B cell (primary cell): ENCODE measurements at regions of chr6 and their contacts with region 1.

Region 1: DNA sequence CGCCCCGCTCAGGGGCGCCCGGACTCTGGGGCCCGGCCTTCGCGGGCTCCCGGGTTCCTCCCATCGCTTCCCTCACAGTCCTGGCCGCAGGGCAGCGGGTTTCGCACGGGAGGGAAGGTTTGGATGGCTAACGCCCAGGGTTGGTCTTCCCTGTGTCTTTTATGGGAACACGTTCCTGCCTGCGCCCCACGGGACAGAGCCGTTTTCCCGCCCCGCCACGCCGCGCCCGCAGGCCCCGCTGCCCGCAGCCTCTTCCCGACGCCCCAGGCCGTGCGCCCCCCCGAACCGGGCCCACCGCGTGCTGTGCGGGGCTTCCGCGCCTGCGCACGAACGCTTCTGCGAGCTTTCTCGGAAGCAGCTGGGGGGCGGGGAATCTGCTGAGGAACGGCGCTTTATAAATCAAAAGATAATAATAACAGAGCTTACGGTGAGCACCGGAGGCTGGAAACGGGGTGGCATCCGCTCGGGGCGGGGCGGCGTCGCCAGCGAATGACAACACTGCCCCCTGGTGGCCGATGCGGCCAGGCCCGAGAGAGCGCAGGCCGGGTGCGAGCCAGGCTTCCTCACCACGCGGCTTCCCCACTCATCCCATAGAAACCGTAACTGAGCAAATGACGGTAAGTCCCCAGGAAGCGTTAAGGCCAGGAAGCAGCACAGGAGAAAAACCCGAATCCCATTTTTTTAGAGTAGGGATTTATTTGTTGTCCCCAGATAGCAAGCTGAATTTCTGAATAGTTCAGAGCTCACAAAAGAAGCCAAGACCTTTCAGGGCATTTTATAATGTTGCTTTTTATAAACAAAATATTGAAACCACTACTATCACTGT is 116.4 kb downstream of the MYLK4 start:
- DNase-seq: peak; percentile 83
- ATAC-seq: peak; percentile 96
- H3K4me3 ChIP-seq: peak overlapping the region in 4 of 5 experiments; percentile 34 to 63 (median 48)
- H3K4me3 Mint-ChIP-seq: peak overlapping the region; percentile 80
- H3K27ac ChIP-seq: no peak overlapping the region
- H3K27ac Mint-ChIP-seq: peak overlapping the region; percentile 26
- H3K4me1 ChIP-seq: peaks cover 5 to 10% of the 10 kb centered on the region in 2 donors
- H3K4me1 Mint-ChIP-seq: peaks cover 6% of the 10 kb centered on the region
- H3K27me3 ChIP-seq: peaks cover 0 to 5% (median under 1%) of the 10 kb centered on the region in 4 experiments
- H3K27me3 Mint-ChIP-seq: peaks cover 18% of the 10 kb centered on the region
- CTCF ChIP-seq: peak; percentile 97

Region 2: GRCh38 chr6:1609648-1610496 is 1024.5 kb before region 1 on chr6 and contains the start of gene FOXC1:
- CTCF ChIA-PET with region 1: interaction called, 11 read pairs
- POLR2A ChIA-PET with region 1: no interaction called
- intact Hi-C with region 1: loop called (anchors 2 kb)
- DNase-seq: peak; percentile 64
- ATAC-seq: peak; percentile 56
- H3K4me3 ChIP-seq: peak within 1 kb of the TSS in 3 of 5 experiments; percentile 44 to 60 (median 54)
- H3K4me3 Mint-ChIP-seq: peak within 1 kb of the TSS; percentile 88
- H3K27ac ChIP-seq: no peak within 1 kb of the TSS
- H3K27ac Mint-ChIP-seq: peak within 1 kb of the TSS; percentile 81
- H3K4me1 ChIP-seq: peaks cover 65 to 79% of the 10 kb centered on the region in 2 donors
- H3K4me1 Mint-ChIP-seq: peaks cover 50% of the 10 kb centered on the region
- H3K27me3 ChIP-seq: peaks cover 0 to 75% (median 59%) of the 10 kb centered on the region in 4 experiments
- H3K27me3 Mint-ChIP-seq: peaks cover 58% of the 10 kb centered on the region
- CTCF ChIP-seq: no peak
- total RNA-seq, gene FOXC1: 0.39 and 0.52 TPM in 2 replicates

Region 3: DNA sequence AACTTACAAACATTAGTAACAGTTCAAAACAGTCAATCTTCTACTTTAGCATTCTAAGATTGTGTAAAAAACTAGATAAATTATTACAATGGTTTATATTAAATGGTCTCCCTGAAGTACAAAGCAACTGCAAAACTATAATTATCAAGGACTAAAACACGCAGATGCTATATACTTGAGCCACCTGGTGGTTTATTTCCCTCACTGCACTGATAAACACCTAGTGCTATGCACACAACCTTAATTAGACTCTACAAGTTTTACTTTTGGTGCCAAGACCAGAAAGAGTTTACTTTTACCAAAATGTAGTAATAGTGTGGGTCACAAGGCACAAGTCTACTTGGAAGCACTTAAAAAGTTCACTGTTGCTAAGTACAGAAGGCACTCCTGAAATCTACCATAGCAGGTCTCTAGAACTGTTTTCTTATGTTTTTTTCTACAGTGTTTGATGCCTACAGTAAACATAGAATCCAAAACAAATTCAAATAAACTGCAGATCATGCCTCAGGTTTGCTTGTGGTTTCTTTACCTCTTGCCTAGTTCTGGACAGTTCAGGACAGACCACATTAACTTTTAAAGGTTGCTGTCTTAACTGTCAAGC is 438.2 kb before region 1 on chr6:
- CTCF ChIA-PET with region 1: interaction called, 3 read pairs
- POLR2A ChIA-PET with region 1: no interaction called
- intact Hi-C with region 1: loop called (anchors 5 kb)
- DNase-seq: peak; percentile 67
- ATAC-seq: peak; percentile 73
- H3K4me3 ChIP-seq: no peak overlapping the region
- H3K4me3 Mint-ChIP-seq: no peak overlapping the region
- H3K27ac ChIP-seq: no peak overlapping the region
- H3K27ac Mint-ChIP-seq: no peak overlapping the region
- H3K4me1 ChIP-seq: peaks cover 10 to 11% of the 10 kb centered on the region in 2 donors
- H3K4me1 Mint-ChIP-seq: peaks cover 2% of the 10 kb centered on the region
- H3K27me3 ChIP-seq: no peaks in the 10 kb centered on the region
- H3K27me3 Mint-ChIP-seq: no peaks in the 10 kb centered on the region
- CTCF ChIP-seq: peak; percentile 97

Region 4: DNA sequence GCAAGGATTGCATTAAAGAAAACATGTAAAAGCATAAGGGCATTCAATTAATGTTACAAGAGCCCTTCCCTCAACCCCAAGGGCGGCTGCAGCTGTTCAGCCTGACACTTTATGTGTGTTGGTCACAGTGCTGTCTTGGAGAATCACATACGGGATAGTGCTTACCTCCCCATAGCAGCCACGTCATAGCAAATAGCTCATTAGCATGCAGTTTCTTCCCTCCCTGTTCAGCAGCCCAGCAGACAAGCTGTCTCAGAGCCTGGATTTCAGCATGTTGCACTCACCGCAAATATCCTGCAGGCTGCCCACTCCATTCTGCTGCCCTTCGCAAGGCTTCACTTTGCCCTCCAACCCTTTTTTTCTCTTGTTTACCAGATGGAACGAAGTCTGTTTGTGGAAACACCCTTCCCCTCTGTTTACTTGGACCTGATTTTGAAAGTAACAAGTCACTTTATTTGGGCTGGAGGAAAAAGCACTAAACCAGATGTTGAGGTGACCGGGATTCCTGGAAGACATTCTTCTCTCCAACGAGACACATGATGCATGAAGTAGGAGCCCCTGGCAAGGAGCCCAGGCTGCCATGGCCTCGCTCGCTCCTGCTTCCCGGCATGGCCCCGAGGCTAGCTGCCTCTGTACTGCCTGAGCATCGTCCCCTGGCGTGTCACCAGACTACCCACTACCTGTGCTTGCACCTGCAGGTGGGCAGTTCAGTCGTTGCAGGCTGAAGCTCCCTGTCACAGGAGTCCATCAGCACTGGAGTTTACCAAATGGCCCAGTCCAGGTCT is 237.3 kb before region 1 on chr6:
- CTCF ChIA-PET with region 1: no interaction called
- POLR2A ChIA-PET with region 1: no interaction called
- intact Hi-C with region 1: no loop called
- DNase-seq: no peak
- ATAC-seq: no peak
- H3K4me3 ChIP-seq: no peak overlapping the region
- H3K4me3 Mint-ChIP-seq: no peak overlapping the region
- H3K27ac ChIP-seq: no peak overlapping the region
- H3K27ac Mint-ChIP-seq: no peak overlapping the region
- H3K4me1 ChIP-seq: no peaks in the 10 kb centered on the region
- H3K4me1 Mint-ChIP-seq: no peaks in the 10 kb centered on the region
- H3K27me3 ChIP-seq: no peaks in the 10 kb centered on the region
- H3K27me3 Mint-ChIP-seq: no peaks in the 10 kb centered on the region
- CTCF ChIP-seq: no peak

Region 5: GRCh38 chr6:2646346-2646745 is 12.0 kb after region 1 on chr6:
- CTCF ChIA-PET with region 1: interaction called, 45 read pairs
- POLR2A ChIA-PET with region 1: no interaction called
- intact Hi-C with region 1: no loop called
- DNase-seq: no peak
- ATAC-seq: no peak
- H3K4me3 ChIP-seq: no peak overlapping the region
- H3K4me3 Mint-ChIP-seq: no peak overlapping the region
- H3K27ac ChIP-seq: no peak overlapping the region
- H3K27ac Mint-ChIP-seq: no peak overlapping the region
- H3K4me1 ChIP-seq: no peaks in the 10 kb centered on the region
- H3K4me1 Mint-ChIP-seq: peaks cover under 1% of the 10 kb centered on the region
- H3K27me3 ChIP-seq: peaks cover 0 to 5% (median 3%) of the 10 kb centered on the region in 4 experiments
- H3K27me3 Mint-ChIP-seq: peaks cover 53% of the 10 kb centered on the region
- CTCF ChIP-seq: no peak

Region 6: DNA sequence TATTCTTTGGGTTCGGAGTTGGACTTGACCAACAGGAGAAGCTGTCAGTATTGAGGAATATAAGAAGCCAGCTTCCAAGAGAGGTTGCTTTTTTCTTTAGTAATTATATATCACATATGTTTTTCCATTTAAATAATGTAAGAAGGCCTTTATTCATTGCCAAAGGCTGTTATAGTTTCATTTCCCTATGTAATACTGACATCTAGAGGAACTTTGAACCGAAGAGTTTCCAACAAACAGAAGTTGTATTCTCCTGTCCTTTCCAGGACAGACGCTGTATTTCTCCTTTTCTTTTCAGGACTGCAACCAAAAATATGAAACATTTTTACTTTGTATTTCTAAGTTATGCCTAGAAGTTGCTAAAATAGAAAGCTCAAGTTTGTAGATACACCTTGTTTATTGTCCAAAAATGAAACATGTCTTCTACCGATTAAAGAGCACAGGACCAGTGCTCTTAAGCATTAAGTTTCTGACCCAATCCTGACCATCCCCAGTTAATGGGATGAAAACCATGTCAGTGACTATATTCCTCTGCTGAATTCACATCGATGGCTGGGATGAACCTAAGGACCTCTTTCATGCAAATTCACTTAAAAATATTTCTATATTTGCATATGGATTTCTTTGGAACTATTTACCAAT is 61.2 kb after region 1 on chr6:
- CTCF ChIA-PET with region 1: interaction called, 22 read pairs
- POLR2A ChIA-PET with region 1: no interaction called
- intact Hi-C with region 1: loop called (anchors 1 kb)
- DNase-seq: peak; percentile 42
- ATAC-seq: no peak
- H3K4me3 ChIP-seq: no peak overlapping the region
- H3K4me3 Mint-ChIP-seq: no peak overlapping the region
- H3K27ac ChIP-seq: no peak overlapping the region
- H3K27ac Mint-ChIP-seq: no peak overlapping the region
- H3K4me1 ChIP-seq: no peaks in the 10 kb centered on the region
- H3K4me1 Mint-ChIP-seq: no peaks in the 10 kb centered on the region
- H3K27me3 ChIP-seq: no peaks in the 10 kb centered on the region
- H3K27me3 Mint-ChIP-seq: peaks cover 7% of the 10 kb centered on the region
- CTCF ChIP-seq: peak; percentile 66